ENCODE measurements at regions of chrX and their contacts with region 1.

Region 1: GRCh38 chrX:20442597-20442996 is 175.9 kb upstream of the RPS6KA3 start:
- DNase-seq: peak; percentile 81
- ATAC-seq: peak; percentile 70
- H3K4me3 ChIP-seq: no peak overlapping the region
- H3K4me3 Mint-ChIP-seq: no peak overlapping the region
- H3K27ac ChIP-seq: no peak overlapping the region
- H3K27ac Mint-ChIP-seq: no peak overlapping the region
- H3K4me1 ChIP-seq: no peaks in the 10 kb centered on the region
- H3K4me1 Mint-ChIP-seq: no peaks in the 10 kb centered on the region
- H3K27me3 ChIP-seq: no peaks in the 10 kb centered on the region
- H3K27me3 Mint-ChIP-seq: peaks cover 4% of the 10 kb centered on the region
- CTCF ChIP-seq: peak; percentile 71

Region 2: DNA sequence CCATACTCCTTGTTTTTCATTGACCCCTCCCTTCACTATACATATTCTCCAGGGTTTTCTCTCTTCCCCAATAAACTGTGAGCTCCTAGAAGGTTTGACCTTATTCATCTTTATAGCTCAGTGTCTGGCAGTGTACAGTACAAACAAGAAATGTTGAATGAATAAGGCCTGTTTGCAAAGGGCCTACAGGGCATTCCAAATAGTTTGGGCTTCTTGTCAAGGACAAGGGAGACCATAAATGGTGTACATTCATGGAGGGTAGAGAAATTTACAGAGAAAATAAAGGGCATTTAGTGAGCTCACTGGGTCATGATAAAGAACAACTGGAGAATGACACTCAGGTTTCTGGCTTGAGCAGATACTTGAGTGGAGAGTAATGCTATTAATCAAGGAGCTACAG is 253.4 kb before region 1 on chrX:
- CTCF ChIA-PET with region 1: interaction called, 3 read pairs
- POLR2A ChIA-PET with region 1: no interaction called
- intact Hi-C with region 1: loop called (anchors 5 kb)
- DNase-seq: no peak
- ATAC-seq: no peak
- H3K4me3 ChIP-seq: no peak overlapping the region
- H3K4me3 Mint-ChIP-seq: no peak overlapping the region
- H3K27ac ChIP-seq: no peak overlapping the region
- H3K27ac Mint-ChIP-seq: no peak overlapping the region
- H3K4me1 ChIP-seq: no peaks in the 10 kb centered on the region
- H3K4me1 Mint-ChIP-seq: no peaks in the 10 kb centered on the region
- H3K27me3 ChIP-seq: no peaks in the 10 kb centered on the region
- H3K27me3 Mint-ChIP-seq: no peaks in the 10 kb centered on the region
- CTCF ChIP-seq: no peak

Region 3: GRCh38 chrX:20252381-20253231 is 190.0 kb before region 1 on chrX:
- CTCF ChIA-PET with region 1: interaction called, 16 read pairs
- POLR2A ChIA-PET with region 1: no interaction called
- intact Hi-C with region 1: loop called (anchors 1 kb)
- DNase-seq: peak; percentile 66
- ATAC-seq: peak; percentile 64
- H3K4me3 ChIP-seq: no peak overlapping the region
- H3K4me3 Mint-ChIP-seq: no peak overlapping the region
- H3K27ac ChIP-seq: no peak overlapping the region
- H3K27ac Mint-ChIP-seq: no peak overlapping the region
- H3K4me1 ChIP-seq: peaks cover 3 to 13% of the 10 kb centered on the region in 2 donors
- H3K4me1 Mint-ChIP-seq: peaks cover 41% of the 10 kb centered on the region
- H3K27me3 ChIP-seq: no peaks in the 10 kb centered on the region
- H3K27me3 Mint-ChIP-seq: no peaks in the 10 kb centered on the region
- CTCF ChIP-seq: peak; percentile 49

Region 4: DNA sequence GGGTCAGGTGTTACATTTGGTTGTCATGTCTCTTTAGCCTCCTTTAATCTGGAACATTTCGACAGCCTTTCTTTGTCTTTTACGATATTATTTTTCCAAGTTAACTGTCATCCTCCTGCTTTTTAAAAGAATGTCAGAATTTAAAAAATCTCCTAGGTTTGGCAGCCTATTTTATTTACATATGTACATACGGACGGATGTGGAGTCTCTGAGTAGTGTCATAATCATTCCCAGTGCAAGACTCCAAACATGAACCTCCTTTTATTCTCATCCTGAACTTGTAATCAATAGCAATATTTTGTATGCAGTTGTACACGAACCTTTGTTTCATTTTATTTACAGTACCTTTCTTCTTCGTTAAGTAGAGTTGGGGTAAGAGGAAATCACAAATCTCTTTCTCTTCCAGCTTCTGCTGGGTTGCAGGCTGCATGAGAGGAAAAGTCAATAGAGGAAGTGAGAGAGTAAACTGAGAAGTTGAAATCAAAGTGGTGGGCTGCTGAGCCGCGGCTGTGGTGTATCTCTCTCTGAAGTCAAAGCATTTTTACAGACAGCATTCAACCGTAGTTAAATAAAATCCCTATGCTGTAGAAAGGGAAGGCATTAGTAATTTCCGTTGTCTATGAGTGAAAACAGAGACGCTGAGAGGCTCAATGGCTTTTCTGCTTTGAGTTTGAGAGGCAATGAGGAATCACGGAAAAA is 122.0 kb before region 1 on chrX:
- CTCF ChIA-PET with region 1: no interaction called
- POLR2A ChIA-PET with region 1: no interaction called
- intact Hi-C with region 1: loop called (anchors 10 kb)
- DNase-seq: peak; percentile 74
- ATAC-seq: peak; percentile 96
- H3K4me3 ChIP-seq: peak overlapping the region in 1 of 5 experiments; percentile 30
- H3K4me3 Mint-ChIP-seq: peak overlapping the region; percentile 66
- H3K27ac ChIP-seq: peak overlapping the region; percentile 46 to 64
- H3K27ac Mint-ChIP-seq: peak overlapping the region; percentile 76
- H3K4me1 ChIP-seq: peaks cover 24 to 31% of the 10 kb centered on the region in 2 donors
- H3K4me1 Mint-ChIP-seq: peaks cover 43% of the 10 kb centered on the region
- H3K27me3 ChIP-seq: no peaks in the 10 kb centered on the region
- H3K27me3 Mint-ChIP-seq: no peaks in the 10 kb centered on the region
- CTCF ChIP-seq: no peak

Region 5: DNA sequence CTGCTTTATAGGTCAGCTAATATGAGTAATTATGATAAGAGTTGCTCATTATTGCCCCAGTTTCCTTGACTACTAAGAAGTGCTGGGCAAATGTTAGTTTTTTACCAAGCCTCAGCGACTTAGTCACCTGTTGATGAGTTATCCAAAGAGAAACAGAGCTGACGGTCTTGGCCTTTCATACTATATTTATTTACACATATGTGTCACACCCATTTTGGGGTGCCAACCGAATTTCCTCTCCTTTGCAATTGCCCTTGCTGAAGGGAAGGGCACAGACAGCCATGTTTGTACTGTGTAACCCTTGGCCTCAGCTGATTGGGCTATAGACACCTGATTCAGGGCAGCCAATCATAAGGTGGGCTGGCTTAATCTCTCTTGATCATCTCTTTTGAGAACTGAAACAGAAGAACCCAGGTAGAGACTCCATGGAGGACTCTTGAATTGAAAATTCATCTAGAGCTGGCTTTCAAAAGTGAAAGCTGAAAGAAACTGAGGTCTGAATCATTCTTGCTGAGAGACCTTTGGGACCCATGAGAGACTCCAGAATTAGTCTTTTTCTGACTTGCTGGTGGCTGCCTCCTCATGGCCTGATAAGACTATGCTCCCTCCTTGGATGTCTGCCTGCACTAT is 64.2 kb before region 1 on chrX:
- CTCF ChIA-PET with region 1: interaction called, 3 read pairs
- POLR2A ChIA-PET with region 1: no interaction called
- intact Hi-C with region 1: loop called (anchors 10 kb)
- DNase-seq: no peak
- ATAC-seq: no peak
- H3K4me3 ChIP-seq: no peak overlapping the region
- H3K4me3 Mint-ChIP-seq: no peak overlapping the region
- H3K27ac ChIP-seq: no peak overlapping the region
- H3K27ac Mint-ChIP-seq: no peak overlapping the region
- H3K4me1 ChIP-seq: peaks cover 13 to 20% of the 10 kb centered on the region in 2 donors
- H3K4me1 Mint-ChIP-seq: peaks cover 19% of the 10 kb centered on the region
- H3K27me3 ChIP-seq: no peaks in the 10 kb centered on the region
- H3K27me3 Mint-ChIP-seq: no peaks in the 10 kb centered on the region
- CTCF ChIP-seq: no peak

Region 6: DNA sequence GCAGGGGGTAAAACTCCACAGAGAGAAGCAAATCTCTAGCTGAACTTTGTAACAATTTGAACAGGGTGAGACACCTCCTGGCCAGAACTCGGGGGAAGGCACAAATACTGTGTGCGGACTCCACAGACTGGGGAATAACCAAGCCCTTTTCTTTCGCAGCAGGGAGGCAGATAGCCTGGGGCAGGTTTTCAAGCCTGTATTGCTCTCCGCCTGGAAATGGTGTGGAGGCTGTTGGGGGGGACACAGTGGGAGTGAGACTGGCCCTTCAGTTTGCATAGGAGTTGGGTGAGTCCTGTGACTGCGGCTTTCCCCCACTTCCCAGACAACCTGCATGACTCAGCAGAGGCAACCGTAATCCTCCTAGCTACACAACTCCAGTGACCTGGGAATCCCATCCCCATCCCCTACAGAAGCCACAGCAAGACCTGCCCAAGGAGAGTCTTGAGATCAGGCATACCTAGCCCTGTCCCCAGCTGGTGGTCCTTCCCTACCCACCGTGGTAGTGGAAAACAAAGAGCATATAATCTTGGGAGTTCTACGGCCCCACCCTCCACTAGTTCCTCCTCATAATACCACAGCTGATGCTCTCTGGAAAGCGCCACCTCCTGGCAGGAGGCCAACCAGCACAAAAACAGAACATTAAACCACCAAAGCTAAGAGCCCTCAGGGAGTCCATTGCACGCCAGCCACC is 1328.2 kb after region 1 on chrX:
- CTCF ChIA-PET with region 1: no interaction called
- POLR2A ChIA-PET with region 1: interaction called, 11 read pairs
- intact Hi-C with region 1: no loop called
- DNase-seq: no peak
- ATAC-seq: no peak
- H3K4me3 ChIP-seq: no peak overlapping the region
- H3K4me3 Mint-ChIP-seq: no peak overlapping the region
- H3K27ac ChIP-seq: no peak overlapping the region
- H3K27ac Mint-ChIP-seq: no peak overlapping the region
- H3K4me1 ChIP-seq: no peaks in the 10 kb centered on the region
- H3K4me1 Mint-ChIP-seq: no peaks in the 10 kb centered on the region
- H3K27me3 ChIP-seq: no peaks in the 10 kb centered on the region
- H3K27me3 Mint-ChIP-seq: peaks cover 19% of the 10 kb centered on the region
- CTCF ChIP-seq: no peak

Measured in B cell (primary cell).